ENCODE measurements at regions of chr5 and their contacts with region 1.

Region 1: DNA sequence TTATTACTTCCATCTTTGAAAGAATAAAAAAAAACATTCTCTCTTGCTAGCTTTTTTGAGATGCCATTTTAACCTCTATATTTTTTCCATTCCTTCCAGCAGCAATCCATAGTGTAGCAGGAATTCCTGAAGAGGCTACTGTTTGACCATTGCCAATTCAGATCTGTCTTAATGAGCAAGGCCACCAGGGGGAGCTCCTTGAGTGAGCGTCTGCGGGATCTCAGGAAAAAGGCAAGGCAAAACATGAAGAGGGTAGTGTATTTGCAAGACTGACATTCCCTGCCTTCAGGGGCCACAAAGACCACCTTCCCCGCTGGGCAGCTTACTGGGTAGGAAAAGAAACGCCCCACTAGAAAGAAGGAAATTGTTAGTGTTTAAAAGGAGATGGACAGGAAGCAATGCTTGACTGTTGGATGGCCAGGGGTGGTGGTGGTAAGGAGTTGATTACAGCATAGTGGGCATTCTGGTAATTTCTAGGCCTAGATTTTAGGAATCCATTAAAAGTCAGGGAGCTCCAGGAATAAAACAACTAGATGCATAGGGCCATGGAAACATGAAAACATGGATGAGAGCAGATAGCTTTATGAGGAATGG is 206.6 kb upstream of the HAPLN1 start:
- DNase-seq: no peak
- ATAC-seq: peak; percentile 72
- H3K4me3 ChIP-seq: no peak overlapping the region
- H3K27ac ChIP-seq: no peak overlapping the region
- H3K4me1 ChIP-seq: no peaks in the 10 kb centered on the region
- H3K27me3 ChIP-seq: peaks cover 0 to 4% of the 10 kb centered on the region in 2 experiments; a peak in 1 of 4 replicates
- CTCF ChIP-seq: peak; percentile 67 to 84 (median 74)
- EP300 ChIP-seq: no peak
- POLR2A ChIP-seq: no peak
- RAD21 ChIP-seq: peak; percentile 71

Region 2: GRCh38 chr5:83387041-83387440 is 540.2 kb before region 1 on chr5:
- CTCF ChIA-PET with region 1: no interaction called
- POLR2A ChIA-PET with region 1: no interaction called
- RAD21 ChIA-PET with region 1: no interaction called
- SMC1A ChIA-PET with region 1: no interaction called
- in situ Hi-C with region 1: no loop called
- intact Hi-C with region 1: no loop called
- DNase-seq: no peak
- ATAC-seq: no peak
- H3K4me3 ChIP-seq: no peak overlapping the region
- H3K27ac ChIP-seq: no peak overlapping the region
- H3K4me1 ChIP-seq: no peaks in the 10 kb centered on the region
- H3K27me3 ChIP-seq: no peaks in the 10 kb centered on the region
- CTCF ChIP-seq: no peak
- EP300 ChIP-seq: no peak
- POLR2A ChIP-seq: no peak
- RAD21 ChIP-seq: no peak

Region 3: DNA sequence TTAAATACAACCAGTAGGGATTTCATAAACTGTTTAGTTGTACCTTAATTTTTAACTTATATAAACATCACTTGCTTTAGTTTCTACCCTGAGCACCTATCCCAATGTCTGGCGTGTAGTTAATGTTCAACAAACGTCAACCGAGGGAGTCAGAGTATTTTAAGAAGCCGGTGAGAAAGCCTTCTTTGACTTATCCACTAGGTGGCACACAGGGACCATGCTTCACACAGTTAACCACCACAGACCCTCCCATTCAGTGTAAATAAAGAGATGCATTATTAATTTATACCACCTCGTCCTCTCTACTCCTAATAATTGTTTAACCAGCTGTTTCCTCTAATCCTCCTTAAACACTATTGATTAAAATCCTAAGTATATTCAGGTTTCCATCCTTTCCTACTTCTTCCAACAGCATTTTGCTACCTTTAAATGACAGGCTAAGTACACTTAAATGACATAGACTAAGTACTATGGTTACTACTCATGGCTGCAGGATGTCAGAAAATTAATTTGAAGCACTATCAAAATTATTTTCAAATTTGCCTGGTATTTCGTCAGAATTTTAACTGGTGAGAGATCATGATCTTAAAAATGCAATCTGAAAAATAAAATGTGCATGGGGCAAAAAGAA is 208.9 kb before region 1 on chr5:
- CTCF ChIA-PET with region 1: interaction called, 19 read pairs
- POLR2A ChIA-PET with region 1: no interaction called
- RAD21 ChIA-PET with region 1: interaction called, 3 read pairs
- SMC1A ChIA-PET with region 1: interaction called, 13 read pairs
- in situ Hi-C with region 1: no loop called
- intact Hi-C with region 1: loop called (anchors 2 kb)
- DNase-seq: no peak
- ATAC-seq: peak; percentile 87
- H3K4me3 ChIP-seq: no peak overlapping the region
- H3K27ac ChIP-seq: no peak overlapping the region
- H3K4me1 ChIP-seq: no peaks in the 10 kb centered on the region
- H3K27me3 ChIP-seq: peaks cover 2 to 10% of the 10 kb centered on the region in 2 experiments; a peak in 3 of 4 replicates
- CTCF ChIP-seq: peak; percentile 71 to 87 (median 72)
- EP300 ChIP-seq: no peak
- POLR2A ChIP-seq: no peak
- RAD21 ChIP-seq: peak; percentile 97

Region 4: GRCh38 chr5:83787631-83788030 is 139.6 kb before region 1 on chr5:
- CTCF ChIA-PET with region 1: no interaction called
- POLR2A ChIA-PET with region 1: no interaction called
- RAD21 ChIA-PET with region 1: no interaction called
- SMC1A ChIA-PET with region 1: no interaction called
- in situ Hi-C with region 1: no loop called
- intact Hi-C with region 1: no loop called
- DNase-seq: no peak
- ATAC-seq: no peak
- H3K4me3 ChIP-seq: no peak overlapping the region
- H3K27ac ChIP-seq: no peak overlapping the region
- H3K4me1 ChIP-seq: no peaks in the 10 kb centered on the region
- H3K27me3 ChIP-seq: no peaks in the 10 kb centered on the region
- CTCF ChIP-seq: no peak
- EP300 ChIP-seq: no peak
- POLR2A ChIP-seq: no peak
- RAD21 ChIP-seq: no peak

Region 5: DNA sequence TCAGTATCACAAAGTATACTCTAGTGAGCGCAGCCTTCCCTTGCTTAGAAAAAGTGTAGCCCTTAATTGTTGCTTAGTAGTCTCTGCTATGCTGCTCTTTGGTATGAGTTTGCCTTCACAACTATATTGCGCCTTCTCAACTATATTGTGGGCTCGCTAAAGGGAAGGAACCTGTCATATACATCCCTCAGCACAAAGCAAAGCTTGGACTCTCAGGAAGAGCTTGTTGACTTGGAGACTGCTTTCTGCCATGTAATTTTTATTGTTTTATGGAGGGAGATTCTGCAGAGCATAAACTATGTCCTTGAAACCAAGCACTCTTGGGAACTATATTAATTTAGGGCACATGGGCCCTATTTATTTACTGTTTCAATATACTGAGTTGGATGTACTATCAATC is 87.4 kb before region 1 on chr5:
- CTCF ChIA-PET with region 1: no interaction called
- POLR2A ChIA-PET with region 1: no interaction called
- RAD21 ChIA-PET with region 1: no interaction called
- SMC1A ChIA-PET with region 1: no interaction called
- in situ Hi-C with region 1: no loop called
- intact Hi-C with region 1: no loop called
- DNase-seq: no peak
- ATAC-seq: no peak
- H3K4me3 ChIP-seq: no peak overlapping the region
- H3K27ac ChIP-seq: no peak overlapping the region
- H3K4me1 ChIP-seq: peaks cover 7% of the 10 kb centered on the region
- H3K27me3 ChIP-seq: no peaks in the 10 kb centered on the region
- CTCF ChIP-seq: no peak
- EP300 ChIP-seq: no peak
- POLR2A ChIP-seq: no peak
- RAD21 ChIP-seq: no peak

Region 6: GRCh38 chr5:83900306-83900705 is 26.9 kb before region 1 on chr5:
- CTCF ChIA-PET with region 1: interaction called, 12 read pairs
- POLR2A ChIA-PET with region 1: no interaction called
- RAD21 ChIA-PET with region 1: no interaction called
- SMC1A ChIA-PET with region 1: no interaction called
- in situ Hi-C with region 1: no loop called
- intact Hi-C with region 1: no loop called
- DNase-seq: no peak
- ATAC-seq: no peak
- H3K4me3 ChIP-seq: no peak overlapping the region
- H3K27ac ChIP-seq: no peak overlapping the region
- H3K4me1 ChIP-seq: no peaks in the 10 kb centered on the region
- H3K27me3 ChIP-seq: no peaks in the 10 kb centered on the region
- CTCF ChIP-seq: no peak
- EP300 ChIP-seq: no peak
- POLR2A ChIP-seq: no peak
- RAD21 ChIP-seq: no peak

Region 7: DNA sequence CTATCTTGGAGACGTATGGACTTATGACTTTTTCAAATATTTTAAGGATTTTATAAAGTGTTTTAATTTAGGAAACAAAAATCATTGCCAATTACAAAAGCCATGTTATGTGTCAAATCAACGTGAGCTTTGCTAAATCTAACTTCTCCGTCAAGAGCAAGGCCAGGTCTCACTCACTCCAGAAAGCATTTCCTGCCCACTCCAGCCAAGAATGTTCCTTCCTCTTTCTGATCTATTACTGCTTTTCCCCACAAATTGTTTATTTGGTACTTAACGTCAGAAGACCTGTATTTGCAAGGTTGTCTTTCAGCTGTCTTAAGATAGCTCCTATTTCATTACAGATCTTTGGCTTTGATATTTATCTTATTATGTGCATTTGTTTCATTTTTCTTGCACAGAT is 13.0 kb before region 1 on chr5:
- CTCF ChIA-PET with region 1: interaction called, 42 read pairs
- POLR2A ChIA-PET with region 1: no interaction called
- RAD21 ChIA-PET with region 1: interaction called, 4 read pairs
- SMC1A ChIA-PET with region 1: interaction called, 17 read pairs
- in situ Hi-C with region 1: no loop called
- intact Hi-C with region 1: no loop called
- DNase-seq: no peak
- ATAC-seq: no peak
- H3K4me3 ChIP-seq: no peak overlapping the region
- H3K27ac ChIP-seq: no peak overlapping the region
- H3K4me1 ChIP-seq: no peaks in the 10 kb centered on the region
- H3K27me3 ChIP-seq: no peaks in the 10 kb centered on the region
- CTCF ChIP-seq: no peak
- EP300 ChIP-seq: no peak
- POLR2A ChIP-seq: no peak
- RAD21 ChIP-seq: no peak

Region 8: GRCh38 chr5:83937837-83938236 is 10.6 kb after region 1 on chr5:
- CTCF ChIA-PET with region 1: interaction called, 12 read pairs
- POLR2A ChIA-PET with region 1: no interaction called
- RAD21 ChIA-PET with region 1: no interaction called
- SMC1A ChIA-PET with region 1: interaction called, 4 read pairs
- in situ Hi-C with region 1: no loop called
- intact Hi-C with region 1: no loop called
- DNase-seq: no peak
- ATAC-seq: no peak
- H3K4me3 ChIP-seq: no peak overlapping the region
- H3K27ac ChIP-seq: no peak overlapping the region
- H3K4me1 ChIP-seq: no peaks in the 10 kb centered on the region
- H3K27me3 ChIP-seq: no peaks in the 10 kb centered on the region
- CTCF ChIP-seq: no peak
- EP300 ChIP-seq: no peak
- POLR2A ChIP-seq: no peak
- RAD21 ChIP-seq: no peak

Region 9: DNA sequence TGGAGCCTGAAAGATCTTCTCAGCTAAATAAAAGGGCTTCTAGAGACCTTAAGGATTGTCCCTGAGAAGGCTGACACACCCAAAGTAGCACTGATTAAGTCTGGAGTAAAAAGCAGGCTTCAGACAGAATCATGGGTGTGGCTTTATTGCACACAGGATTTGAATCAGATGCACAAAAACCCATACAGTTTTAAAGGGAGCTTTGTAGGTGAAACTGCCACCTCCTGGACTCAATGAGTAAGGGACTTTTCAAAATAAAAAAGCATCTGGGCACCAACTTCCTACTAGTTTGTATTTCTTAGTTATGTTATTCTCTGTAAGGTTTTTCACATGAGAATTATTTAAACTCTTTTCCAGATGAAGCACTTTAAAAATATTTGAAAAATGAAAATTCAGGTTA is 328.1 kb after region 1 on chr5:
- CTCF ChIA-PET with region 1: interaction called, 4 read pairs
- POLR2A ChIA-PET with region 1: interaction called, 3 read pairs
- RAD21 ChIA-PET with region 1: no interaction called
- SMC1A ChIA-PET with region 1: interaction called, 3 read pairs
- in situ Hi-C with region 1: no loop called
- intact Hi-C with region 1: loop called (anchors 5 kb)
- DNase-seq: no peak
- ATAC-seq: peak; percentile 70
- H3K4me3 ChIP-seq: no peak overlapping the region
- H3K27ac ChIP-seq: no peak overlapping the region
- H3K4me1 ChIP-seq: no peaks in the 10 kb centered on the region
- H3K27me3 ChIP-seq: no peaks in the 10 kb centered on the region
- CTCF ChIP-seq: peak in 2 of 3 experiments; percentile 6 to 27; a peak in 2 of 6 replicates
- EP300 ChIP-seq: no peak
- POLR2A ChIP-seq: no peak
- RAD21 ChIP-seq: peak; percentile 24; the same call in 1 of the 2 replicates

Region 10: DNA sequence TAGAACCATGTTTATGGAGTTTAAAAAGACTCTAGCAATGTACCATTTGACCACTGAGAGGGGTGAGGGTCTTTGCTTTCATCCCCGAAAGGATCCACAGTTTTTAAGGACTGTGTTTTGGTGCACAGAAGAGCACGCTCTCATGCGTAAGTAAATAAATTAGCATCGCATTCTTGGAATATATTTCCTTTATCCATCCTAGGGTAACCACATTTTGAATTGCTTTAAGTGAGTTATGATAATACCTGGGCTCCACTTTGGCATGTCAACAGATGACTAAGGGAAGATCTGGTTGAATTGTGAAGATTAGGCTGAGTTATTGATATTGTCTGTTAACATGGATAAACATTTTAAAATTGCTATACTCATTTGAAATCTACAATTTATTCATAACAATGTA is 546.9 kb after region 1 on chr5:
- CTCF ChIA-PET with region 1: no interaction called
- POLR2A ChIA-PET with region 1: no interaction called
- RAD21 ChIA-PET with region 1: no interaction called
- SMC1A ChIA-PET with region 1: no interaction called
- in situ Hi-C with region 1: no loop called
- intact Hi-C with region 1: no loop called
- DNase-seq: no peak
- ATAC-seq: no peak
- H3K4me3 ChIP-seq: no peak overlapping the region
- H3K27ac ChIP-seq: no peak overlapping the region
- H3K4me1 ChIP-seq: no peaks in the 10 kb centered on the region
- H3K27me3 ChIP-seq: no peaks in the 10 kb centered on the region
- CTCF ChIP-seq: no peak
- EP300 ChIP-seq: no peak
- POLR2A ChIP-seq: no peak
- RAD21 ChIP-seq: no peak

Region 11: DNA sequence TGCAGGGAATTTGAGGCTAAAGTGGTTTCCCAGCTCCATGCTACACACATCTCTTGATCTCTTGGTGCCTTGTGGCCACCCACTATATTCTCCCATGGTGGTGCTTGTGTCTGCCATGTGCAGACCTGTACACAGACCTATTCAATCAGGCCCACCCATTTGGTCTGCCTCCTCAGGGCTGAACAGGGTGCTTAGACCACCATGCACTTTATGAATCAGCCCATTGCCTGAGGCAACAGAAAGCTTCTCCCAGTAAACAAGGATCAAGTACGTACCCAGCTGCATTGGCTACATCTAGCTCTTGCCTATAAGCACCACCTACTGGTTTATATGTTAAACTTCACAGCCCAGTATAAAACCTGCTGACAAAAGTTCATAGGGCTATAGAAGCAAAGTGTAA is 1121.8 kb after region 1 on chr5:
- CTCF ChIA-PET with region 1: interaction called, 6 read pairs
- POLR2A ChIA-PET with region 1: no interaction called
- RAD21 ChIA-PET with region 1: no interaction called
- SMC1A ChIA-PET with region 1: interaction called, 9 read pairs
- in situ Hi-C with region 1: no loop called
- intact Hi-C with region 1: loop called (anchors 5 kb)
- DNase-seq: no peak
- ATAC-seq: peak; percentile 91
- H3K4me3 ChIP-seq: no peak overlapping the region
- H3K27ac ChIP-seq: no peak overlapping the region
- H3K4me1 ChIP-seq: no peaks in the 10 kb centered on the region
- H3K27me3 ChIP-seq: no peaks in the 10 kb centered on the region
- CTCF ChIP-seq: peak in 2 of 3 experiments; percentile 36 to 48; a peak in 2 of 6 replicates
- EP300 ChIP-seq: no peak
- POLR2A ChIP-seq: no peak
- RAD21 ChIP-seq: peak; percentile 28; the same call in 1 of the 2 replicates